MCF 10A (cell line): ENCODE measurements at regions of chr17 and their contacts with region 1.

Region 1: DNA sequence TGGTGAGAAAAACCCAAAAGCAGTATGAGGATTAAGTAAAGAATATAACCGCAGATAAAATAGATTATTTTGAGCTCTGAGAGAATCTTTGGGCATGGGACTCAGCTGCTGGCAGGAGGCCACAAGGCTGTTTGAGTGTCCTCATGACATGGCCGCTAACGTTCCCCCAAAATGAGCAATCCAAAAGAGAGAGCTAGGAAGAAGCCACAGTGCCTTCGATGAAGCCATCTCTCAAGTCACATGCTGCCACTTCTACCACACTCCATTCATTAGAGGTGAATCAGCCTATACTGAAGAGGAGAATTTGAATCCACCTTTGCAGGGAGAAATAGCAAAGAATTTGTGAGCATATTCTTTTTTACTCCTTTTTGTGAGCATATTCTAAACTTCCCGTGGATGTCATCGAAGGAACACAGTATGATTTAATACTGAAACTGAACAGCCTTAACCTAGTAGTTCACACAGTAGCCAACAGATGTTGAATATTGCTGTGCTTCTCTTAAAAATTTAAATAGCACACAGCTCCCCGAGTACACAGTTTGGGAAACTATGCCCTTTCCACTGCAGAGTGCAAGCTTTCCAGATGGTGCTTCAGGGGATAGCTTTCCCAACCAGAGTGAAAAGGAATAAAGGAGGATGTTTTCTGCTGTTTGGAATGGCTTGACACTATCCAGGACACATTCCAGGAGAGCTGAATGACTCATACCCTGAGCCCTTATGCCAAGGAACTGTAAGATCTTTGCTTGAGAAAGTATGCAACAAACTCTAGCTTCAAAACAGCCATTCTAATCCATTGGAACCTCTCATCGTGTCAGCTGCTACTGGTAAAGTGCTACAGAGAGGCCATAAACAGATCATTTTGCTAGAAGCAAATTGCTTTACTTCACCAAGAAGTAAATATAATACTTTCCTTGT is 33.9 kb downstream of the ANKFY1 start:
- DNase-seq: peak; percentile 90
- H3K4me3 Mint-ChIP-seq: peak overlapping the region; percentile 63
- H3K27ac Mint-ChIP-seq: peak overlapping the region; percentile 64
- H3K4me1 Mint-ChIP-seq: peaks cover 32% of the 10 kb centered on the region
- H3K27me3 Mint-ChIP-seq: no peaks in the 10 kb centered on the region
- CTCF ChIP-seq: no peak

Region 2: DNA sequence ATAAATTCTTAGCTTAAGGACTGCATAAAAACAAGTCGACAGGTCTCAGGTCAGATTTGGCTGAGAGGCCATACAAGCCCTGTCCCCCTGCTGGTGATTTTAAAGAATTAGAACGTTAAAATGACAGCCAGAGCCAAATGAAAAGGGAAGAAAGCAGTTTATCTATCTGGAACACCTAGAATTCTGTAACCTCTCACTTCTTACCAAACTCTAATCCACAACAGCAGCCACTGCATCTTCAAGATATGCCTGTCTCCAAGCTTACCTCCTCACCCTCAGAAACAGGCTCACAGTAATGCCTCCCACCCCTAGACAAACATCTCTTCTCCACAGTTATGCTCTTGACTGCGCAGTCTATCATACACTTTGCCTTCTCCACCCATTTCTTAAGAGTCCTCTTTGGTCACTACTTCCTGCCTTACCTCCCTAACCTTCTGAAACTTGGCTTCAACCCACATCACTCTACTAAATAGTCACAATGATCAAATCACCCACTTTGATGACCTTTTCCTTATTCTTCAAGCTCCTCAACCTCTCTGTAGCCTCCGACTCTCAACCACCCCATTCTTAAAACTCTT is 19.7 kb after region 1 on chr17:
- CTCF ChIA-PET with region 1: interaction called, 10 read pairs
- POLR2A ChIA-PET with region 1: interaction called, 52 read pairs
- intact Hi-C with region 1: no loop called
- DNase-seq: peak; percentile 59
- H3K4me3 Mint-ChIP-seq: no peak overlapping the region
- H3K27ac Mint-ChIP-seq: peak overlapping the region; percentile 14
- H3K4me1 Mint-ChIP-seq: peaks cover 37% of the 10 kb centered on the region
- H3K27me3 Mint-ChIP-seq: no peaks in the 10 kb centered on the region
- CTCF ChIP-seq: peak; percentile 44